ENCODE measurements at regions of chr16 and their contacts with region 1.

Region 1: DNA sequence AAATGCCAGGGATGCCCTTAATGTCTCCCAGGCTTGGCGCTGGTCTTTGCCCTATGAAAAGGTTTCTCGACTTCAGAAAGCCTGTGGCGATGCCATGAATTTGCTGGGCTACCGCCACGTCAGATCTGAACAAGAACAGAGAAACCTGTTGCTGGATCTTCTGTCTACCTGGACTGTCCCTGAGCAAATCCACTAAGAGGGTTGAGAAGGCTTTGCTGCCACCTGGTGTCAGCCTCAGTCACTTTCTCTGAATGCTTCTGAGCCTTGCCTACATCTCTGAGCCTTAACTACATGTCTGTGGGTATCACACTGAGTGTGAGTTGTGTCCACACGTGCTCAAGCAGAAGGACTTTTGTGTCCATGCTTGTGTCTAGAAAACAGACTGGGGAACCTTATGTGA is 11.4 kb downstream of the CHST4 start:
- DNase-seq: no peak
- H3K4me3 ChIP-seq: no peak overlapping the region
- CTCF ChIP-seq: peak; percentile 77

Region 2: GRCh38 chr16:71526111-71526631 is 11.5 kb before region 1 on chr16 and contains the start of gene CHST4:
- CTCF ChIA-PET with region 1: interaction called, 18 read pairs
- POLR2A ChIA-PET with region 1: no interaction called
- DNase-seq: no peak
- H3K4me3 ChIP-seq: peak within 1 kb of the TSS; percentile 12; the same call in 1 of the 2 replicates
- CTCF ChIP-seq: no peak

Region 3: DNA sequence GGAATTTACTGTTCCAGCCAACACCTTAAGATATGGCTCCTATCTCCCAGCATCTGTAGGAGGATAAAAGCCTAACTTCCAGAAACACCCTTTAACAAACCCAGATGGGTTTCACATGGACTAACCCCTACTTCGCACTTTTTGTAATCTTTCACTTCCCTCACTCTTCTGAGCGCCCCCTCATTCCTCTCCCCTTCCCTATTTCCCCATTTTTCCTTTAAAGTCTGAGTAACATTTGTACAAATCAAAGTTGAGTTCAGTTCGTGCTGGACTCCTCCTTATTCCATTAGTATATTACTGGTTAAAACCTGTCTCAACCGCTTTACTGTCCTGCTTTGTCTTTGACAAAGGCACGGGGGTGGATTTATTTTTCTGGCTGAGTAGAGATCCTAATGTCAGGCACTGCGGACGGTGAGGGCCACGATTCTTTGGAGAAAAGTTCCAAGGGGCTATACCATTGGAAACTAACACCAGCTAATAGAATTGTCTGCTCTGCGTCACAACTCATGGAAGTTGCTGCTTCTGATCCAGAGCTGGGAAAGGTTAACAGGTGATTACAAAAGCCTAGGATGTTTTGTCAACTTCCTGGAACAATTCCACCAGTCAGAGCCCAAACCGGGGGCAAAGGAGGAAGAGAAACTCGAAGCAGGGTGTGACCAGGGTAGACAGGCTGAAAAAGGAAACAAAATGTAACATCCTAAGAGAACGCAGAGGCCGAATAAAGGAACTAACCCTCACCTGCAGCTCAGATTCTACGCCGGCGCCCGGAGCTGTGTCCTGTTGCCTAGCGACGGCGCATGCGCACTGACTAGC is 26.7 kb after region 1 on chr16:
- CTCF ChIA-PET with region 1: interaction called, 10 read pairs
- POLR2A ChIA-PET with region 1: no interaction called
- DNase-seq: no peak
- H3K4me3 ChIP-seq: peak overlapping the region; percentile 75
- CTCF ChIP-seq: no peak

Measured in AG04449 (cell line).